Activated T-helper 1 cell treated with anti-CD3 and anti-CD28 coated beads, Interleukin-12 subunit alpha, Interleukin-12 subunit beta, Interleukin-2, Interleukin-4 antibody, amounts not matched to agents 30 ng/mL and 10 ng/mL and 1 ng/mL, durations not matched to agents 14 hours and 24 hours and 36 hours (primary cell): ENCODE measurements at regions of chr10 and their contacts with region 1.

Region 1: GRCh38 chr10:123132576-123133477 is 2.9 kb upstream of the HMX3 start:
- DNase-seq: peak; percentile 74
- H3K4me3 Mint-ChIP-seq: peak overlapping the region; percentile 48
- H3K27ac Mint-ChIP-seq: peak overlapping the region; percentile 85
- H3K4me1 Mint-ChIP-seq: peaks cover 23% of the 10 kb centered on the region
- H3K27me3 Mint-ChIP-seq: peaks cover 74% of the 10 kb centered on the region

Region 2: GRCh38 chr10:122713091-122713885 is 419.5 kb before region 1 on chr10:
- intact Hi-C with region 1: no loop called
- DNase-seq: no peak
- H3K4me3 Mint-ChIP-seq: no peak overlapping the region
- H3K27ac Mint-ChIP-seq: no peak overlapping the region
- H3K4me1 Mint-ChIP-seq: no peaks in the 10 kb centered on the region
- H3K27me3 Mint-ChIP-seq: peaks cover 21% of the 10 kb centered on the region

Region 3: GRCh38 chr10:122847782-122848604 is 284.8 kb before region 1 on chr10:
- intact Hi-C with region 1: no loop called
- DNase-seq: no peak
- H3K4me3 Mint-ChIP-seq: no peak overlapping the region
- H3K27ac Mint-ChIP-seq: no peak overlapping the region
- H3K4me1 Mint-ChIP-seq: peaks cover 16% of the 10 kb centered on the region
- H3K27me3 Mint-ChIP-seq: no peaks in the 10 kb centered on the region

Region 4: GRCh38 chr10:122930140-122930539 is 202.7 kb before region 1 on chr10:
- intact Hi-C with region 1: no loop called
- DNase-seq: no peak
- H3K4me3 Mint-ChIP-seq: no peak overlapping the region
- H3K27ac Mint-ChIP-seq: no peak overlapping the region
- H3K4me1 Mint-ChIP-seq: no peaks in the 10 kb centered on the region
- H3K27me3 Mint-ChIP-seq: no peaks in the 10 kb centered on the region

Region 5: DNA sequence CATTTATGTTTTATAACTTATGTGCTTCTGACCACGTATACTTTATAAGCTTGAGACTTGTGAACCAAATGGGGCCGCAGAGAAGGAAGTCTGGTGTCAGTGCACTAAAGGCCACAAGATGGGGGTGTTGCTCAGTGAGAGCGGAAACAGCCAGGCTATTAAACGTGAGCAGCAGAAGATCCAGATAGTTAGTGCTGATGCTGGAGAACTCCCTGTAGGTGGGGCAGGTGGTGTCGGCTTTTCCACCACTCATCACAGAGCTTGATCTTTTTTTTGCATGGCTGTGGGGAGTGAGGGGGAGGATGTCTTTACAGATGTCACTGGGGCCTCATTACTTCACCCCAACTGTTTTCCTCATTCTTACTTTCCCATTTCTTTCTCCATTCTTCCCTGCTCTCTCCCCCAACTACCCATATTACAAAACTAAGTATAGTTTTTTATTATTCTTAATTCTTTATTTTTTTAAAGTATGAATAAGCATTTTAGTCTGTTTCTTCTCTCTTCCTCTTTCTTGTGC is 89.4 kb before region 1 on chr10:
- intact Hi-C with region 1: loop called (anchors 2 kb)
- DNase-seq: peak; percentile 12
- H3K4me3 Mint-ChIP-seq: no peak overlapping the region
- H3K27ac Mint-ChIP-seq: no peak overlapping the region
- H3K4me1 Mint-ChIP-seq: peaks cover 18% of the 10 kb centered on the region
- H3K27me3 Mint-ChIP-seq: no peaks in the 10 kb centered on the region

Region 6: DNA sequence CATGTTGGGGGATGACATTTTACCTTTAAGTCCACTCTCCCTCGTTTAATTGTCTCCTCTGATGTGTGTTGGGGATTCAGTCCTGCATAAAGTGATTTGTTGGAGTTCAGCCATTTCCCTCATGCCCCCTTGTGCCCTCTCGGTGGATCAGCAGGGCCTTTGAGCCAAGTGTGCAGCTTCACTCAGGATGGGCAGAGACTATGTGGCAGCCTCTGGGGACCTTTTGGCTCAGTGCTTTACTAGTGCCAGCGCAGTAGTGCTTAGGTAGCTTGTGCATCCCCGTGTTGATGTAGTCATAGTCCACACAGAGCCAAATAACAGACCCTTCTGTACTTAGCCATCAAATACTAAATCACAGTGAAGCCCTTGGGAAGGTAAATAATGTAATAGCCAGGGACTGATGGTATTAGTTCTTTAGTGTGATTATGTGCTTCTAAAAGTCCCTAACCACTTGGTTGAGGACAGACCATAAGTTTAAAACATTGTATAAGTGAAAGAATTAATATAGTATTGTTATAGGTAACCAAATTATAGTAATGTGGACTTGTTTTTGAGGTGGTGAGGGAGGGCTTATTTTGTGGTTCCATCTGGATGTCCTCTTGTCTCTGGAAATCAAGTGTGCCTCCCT is 32.7 kb after region 1 on chr10:
- intact Hi-C with region 1: no loop called
- DNase-seq: no peak
- H3K4me3 Mint-ChIP-seq: no peak overlapping the region
- H3K27ac Mint-ChIP-seq: peak overlapping the region; percentile 40
- H3K4me1 Mint-ChIP-seq: peaks cover 38% of the 10 kb centered on the region
- H3K27me3 Mint-ChIP-seq: no peaks in the 10 kb centered on the region

Region 7: DNA sequence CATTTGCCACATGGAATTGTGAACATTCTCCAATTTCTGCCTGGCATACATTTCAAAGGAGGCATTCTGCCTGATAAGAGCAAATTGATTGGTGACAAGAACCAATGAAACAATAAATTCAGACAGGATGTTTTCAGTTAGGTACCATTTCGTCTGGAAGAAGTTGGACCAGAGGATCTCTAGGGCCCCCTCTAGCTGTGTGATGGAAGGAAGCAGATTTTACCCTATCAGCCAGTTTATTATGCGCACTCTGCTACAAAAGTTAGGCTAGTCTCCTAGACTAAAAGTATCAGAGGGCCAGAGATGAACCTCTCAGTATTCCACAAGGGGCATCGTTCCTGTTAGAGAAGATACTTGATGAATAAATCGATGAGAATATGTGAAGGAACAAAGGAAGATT is 139.3 kb after region 1 on chr10:
- intact Hi-C with region 1: loop called (anchors 5 kb)
- DNase-seq: no peak
- H3K4me3 Mint-ChIP-seq: no peak overlapping the region
- H3K27ac Mint-ChIP-seq: no peak overlapping the region
- H3K4me1 Mint-ChIP-seq: no peaks in the 10 kb centered on the region
- H3K27me3 Mint-ChIP-seq: peaks cover 19% of the 10 kb centered on the region

Region 8: DNA sequence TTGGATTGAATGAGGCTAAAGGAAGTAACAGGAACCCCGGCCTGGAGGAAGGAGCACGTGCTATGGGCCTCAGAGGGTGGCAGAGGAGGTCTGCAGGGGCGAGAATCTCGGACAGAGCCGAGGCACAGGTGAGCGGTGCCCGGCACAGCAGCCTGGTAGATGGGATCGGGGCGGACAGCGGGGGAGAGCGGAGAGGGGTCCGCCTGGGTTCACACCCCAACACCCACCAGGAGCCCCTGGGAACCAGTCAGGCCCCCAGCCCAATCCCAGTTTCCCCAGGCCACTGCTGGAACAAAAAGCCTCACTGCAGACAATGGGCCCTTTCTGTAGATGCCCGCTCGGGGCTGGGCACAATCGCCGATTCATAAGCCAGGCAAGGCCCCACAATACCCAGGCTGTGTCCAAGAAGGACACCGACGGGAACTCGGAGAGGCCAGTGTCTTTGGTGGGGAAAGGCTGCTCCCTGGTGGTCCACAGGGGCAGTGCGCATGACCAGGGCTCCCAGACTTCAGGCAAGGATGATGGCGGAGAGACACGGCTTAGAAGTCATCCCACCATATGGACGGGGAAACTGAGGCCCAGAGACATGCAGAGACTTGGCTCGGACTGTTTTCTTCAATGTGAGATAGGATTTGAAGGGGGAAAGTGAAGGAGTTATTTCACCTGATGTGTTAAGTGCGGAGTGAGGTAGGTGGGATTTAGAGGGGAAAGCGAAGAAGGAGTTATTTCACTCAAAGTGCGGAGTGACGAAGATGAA is 426.4 kb after region 1 on chr10:
- intact Hi-C with region 1: loop called (anchors 1 kb)
- DNase-seq: peak; percentile 44
- H3K4me3 Mint-ChIP-seq: no peak overlapping the region
- H3K27ac Mint-ChIP-seq: no peak overlapping the region
- H3K4me1 Mint-ChIP-seq: no peaks in the 10 kb centered on the region
- H3K27me3 Mint-ChIP-seq: peaks cover 6% of the 10 kb centered on the region